Activated T-helper 2 cell treated with anti-CD3 and anti-CD28 coated beads, Interferon-gamma antibody, Interleukin-2, Interleukin-4, amounts not matched to agents 10 μg/mL and 5 μg/mL and 100 μg/mL, durations not matched to agents 14 hours and 24 hours and 36 hours (primary cell): ENCODE measurements at regions of chrX and their contacts with region 1.

Region 1: DNA sequence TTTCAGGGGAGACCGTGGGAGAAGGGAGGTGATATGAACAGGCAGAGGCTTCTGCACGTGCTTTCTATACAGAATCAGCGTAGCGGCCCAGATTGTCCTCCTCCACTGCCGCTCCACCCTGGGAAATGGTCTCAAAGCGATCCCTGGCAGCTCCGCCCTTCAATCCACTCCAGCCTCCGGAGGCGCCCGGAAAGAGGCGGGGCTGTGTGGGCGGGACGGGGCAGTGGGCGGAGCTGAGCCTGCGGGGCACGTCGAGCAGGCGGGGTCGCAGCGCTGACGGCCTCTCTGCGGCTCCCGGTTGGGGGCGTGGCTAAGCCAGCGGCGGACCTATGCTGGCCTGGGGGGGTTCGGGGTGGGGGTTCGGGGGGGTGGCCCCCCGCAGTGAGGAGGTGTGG is 210 bp upstream of the SMIM10L2A start:
- DNase-seq: peak; percentile 81
- H3K4me3 Mint-ChIP-seq: peak overlapping the region; percentile 18
- H3K27ac Mint-ChIP-seq: no peak overlapping the region
- H3K4me1 Mint-ChIP-seq: no peaks in the 10 kb centered on the region
- H3K27me3 Mint-ChIP-seq: peaks cover 22% of the 10 kb centered on the region

Region 2: GRCh38 chrX:134898440-134898839 is 523.1 kb before region 1 on chrX:
- intact Hi-C with region 1: no loop called
- DNase-seq: no peak
- H3K4me3 Mint-ChIP-seq: no peak overlapping the region
- H3K27ac Mint-ChIP-seq: no peak overlapping the region
- H3K4me1 Mint-ChIP-seq: no peaks in the 10 kb centered on the region
- H3K27me3 Mint-ChIP-seq: no peaks in the 10 kb centered on the region

Region 3: DNA sequence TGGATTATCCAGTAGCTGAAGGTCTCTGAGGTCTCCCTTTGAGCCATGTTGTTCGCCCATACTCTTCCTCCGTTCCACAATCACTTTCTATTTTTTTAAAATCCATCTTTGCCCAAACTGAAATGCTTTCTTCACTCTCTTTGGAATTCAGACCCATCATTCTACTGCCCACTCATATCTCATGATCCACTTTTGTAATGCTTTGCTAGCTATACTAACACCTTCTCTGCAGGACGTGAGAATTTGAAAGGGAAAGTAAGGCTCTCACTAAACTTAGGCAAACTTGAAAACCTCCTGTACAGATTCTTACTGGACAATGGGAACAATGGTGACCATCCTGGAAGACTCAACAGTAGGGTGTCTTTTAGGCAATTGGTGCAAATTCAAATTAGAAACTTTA is 360.8 kb before region 1 on chrX:
- intact Hi-C with region 1: no loop called
- DNase-seq: no peak
- H3K4me3 Mint-ChIP-seq: no peak overlapping the region
- H3K27ac Mint-ChIP-seq: no peak overlapping the region
- H3K4me1 Mint-ChIP-seq: no peaks in the 10 kb centered on the region
- H3K27me3 Mint-ChIP-seq: peaks cover 5% of the 10 kb centered on the region

Region 4: DNA sequence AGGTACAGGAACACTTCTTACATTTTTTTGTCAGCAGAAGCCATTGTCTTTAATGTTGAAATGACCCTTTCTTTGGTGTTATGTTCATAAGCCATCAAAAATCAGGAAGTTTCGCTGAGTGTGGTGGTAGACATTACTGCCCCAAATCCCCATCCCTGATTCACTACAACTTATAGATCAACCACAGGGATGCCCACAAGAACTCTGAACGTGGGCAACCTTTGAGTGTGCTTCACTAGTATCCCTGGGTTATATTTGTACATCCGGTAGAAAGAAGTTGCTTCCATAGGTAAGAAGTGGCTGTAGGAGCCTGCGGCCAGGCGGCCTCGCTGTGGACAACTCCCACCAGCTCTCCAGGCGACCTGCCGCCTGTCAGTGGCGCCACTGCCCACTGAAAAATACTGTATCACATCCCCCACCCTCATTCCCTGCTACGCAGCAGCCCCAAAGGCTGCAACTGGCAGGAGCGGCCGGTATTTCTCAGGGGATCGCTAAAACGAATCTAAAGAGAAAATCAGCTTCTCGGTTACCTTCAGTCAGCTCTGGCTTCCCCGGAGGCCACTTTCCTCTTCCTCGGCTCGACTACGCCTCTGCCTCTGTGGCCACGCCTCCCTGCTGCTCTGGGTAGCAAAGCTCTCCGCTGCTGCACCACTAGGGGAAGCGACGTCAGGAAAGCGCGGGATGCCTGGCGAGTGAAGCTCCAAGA is 126.1 kb before region 1 on chrX:
- intact Hi-C with region 1: loop called (anchors 5 kb)
- DNase-seq: peak; percentile 45
- H3K4me3 Mint-ChIP-seq: peak overlapping the region; percentile 83
- H3K27ac Mint-ChIP-seq: peak overlapping the region; percentile 63
- H3K4me1 Mint-ChIP-seq: peaks cover 5% of the 10 kb centered on the region
- H3K27me3 Mint-ChIP-seq: no peaks in the 10 kb centered on the region

Region 5: GRCh38 chrX:135384161-135384836 is 37.2 kb before region 1 on chrX:
- intact Hi-C with region 1: loop called (anchors 5 kb)
- DNase-seq: peak; percentile 48
- H3K4me3 Mint-ChIP-seq: peak overlapping the region; percentile 37
- H3K27ac Mint-ChIP-seq: peak overlapping the region; percentile 75
- H3K4me1 Mint-ChIP-seq: peaks cover 37% of the 10 kb centered on the region
- H3K27me3 Mint-ChIP-seq: no peaks in the 10 kb centered on the region